ENCODE measurements at regions of chr7 and their contacts with region 1.

Region 1: GRCh38 chr7:34321000-34321581 is 336.9 kb upstream of the NPSR1 start:
- DNase-seq: no peak

Region 2: GRCh38 chr7:34247468-34247867 is 73.6 kb before region 1 on chr7:
- intact Hi-C with region 1: no loop called
- DNase-seq: no peak

Region 3: GRCh38 chr7:34430458-34430857 is 109.4 kb after region 1 on chr7:
- intact Hi-C with region 1: loop called (anchors 2 kb)
- DNase-seq: no peak

Region 4: GRCh38 chr7:34584526-34584925 is 263.4 kb after region 1 on chr7:
- intact Hi-C with region 1: no loop called
- DNase-seq: no peak

Region 5: GRCh38 chr7:34596892-34597291 is 275.8 kb after region 1 on chr7:
- intact Hi-C with region 1: loop called (anchors 10 kb)
- DNase-seq: no peak

Measured in cardiac septum (tissue), 1 donor.